IMR-90 (cell line): ENCODE measurements at regions of chr3 and their contacts with region 1.

Region 1: GRCh38 chr3:24220859-24221657 is 273.6 kb downstream of the THRB start:
- DNase-seq: peak; percentile 92
- ATAC-seq: peak; percentile 99
- H3K4me3 ChIP-seq: no peak overlapping the region
- H3K27ac ChIP-seq: no peak overlapping the region
- H3K4me1 ChIP-seq: peaks cover 2% of the 10 kb centered on the region; the same call in 1 of the 2 replicates
- H3K27me3 ChIP-seq: peaks cover 2% of the 10 kb centered on the region
- CTCF ChIP-seq: no peak
- POLR2A ChIP-seq: no peak
- RAD21 ChIP-seq: no peak; the same call in 1 of the 2 replicates

Region 2: GRCh38 chr3:23029001-23029400 is 1192.1 kb before region 1 on chr3:
- CTCF ChIA-PET with region 1: no interaction called
- POLR2A ChIA-PET with region 1: no interaction called
- dilution Hi-C with region 1: no loop called
- in situ Hi-C with region 1: no loop called
- intact Hi-C with region 1: no loop called
- DNase-seq: no peak
- ATAC-seq: no peak
- H3K4me3 ChIP-seq: no peak overlapping the region
- H3K27ac ChIP-seq: no peak overlapping the region
- H3K4me1 ChIP-seq: no peaks in the 10 kb centered on the region
- H3K27me3 ChIP-seq: peaks cover 2% of the 10 kb centered on the region; the same call in 1 of the 2 replicates
- CTCF ChIP-seq: no peak
- POLR2A ChIP-seq: no peak
- RAD21 ChIP-seq: no peak

Region 3: DNA sequence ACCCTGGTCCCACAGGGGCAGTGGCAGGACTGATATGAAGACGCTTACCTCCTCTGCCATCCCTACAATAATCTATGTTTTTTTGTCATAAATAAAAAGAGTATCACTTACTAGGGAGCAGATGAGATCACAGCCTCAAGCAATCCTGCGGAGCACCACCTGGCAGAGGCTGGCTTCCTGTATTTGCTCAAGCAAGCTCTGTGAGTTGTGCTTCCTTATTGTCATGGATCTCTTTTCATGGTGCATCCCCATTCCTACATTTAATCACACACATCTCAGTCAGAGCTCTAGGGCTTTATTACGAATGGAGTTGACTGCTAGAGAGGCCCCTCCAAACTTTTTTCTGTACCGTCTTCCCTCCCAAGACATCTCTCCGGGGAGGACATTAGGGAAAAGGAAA is 832.0 kb before region 1 on chr3:
- CTCF ChIA-PET with region 1: interaction called, 10 read pairs
- POLR2A ChIA-PET with region 1: no interaction called
- dilution Hi-C with region 1: no loop called
- in situ Hi-C with region 1: no loop called
- intact Hi-C with region 1: no loop called
- DNase-seq: no peak
- ATAC-seq: no peak
- H3K4me3 ChIP-seq: no peak overlapping the region
- H3K27ac ChIP-seq: no peak overlapping the region
- H3K4me1 ChIP-seq: no peaks in the 10 kb centered on the region; the same call in 1 of the 2 replicates
- H3K27me3 ChIP-seq: no peaks in the 10 kb centered on the region
- CTCF ChIP-seq: no peak
- POLR2A ChIP-seq: no peak
- RAD21 ChIP-seq: no peak

Region 4: GRCh38 chr3:23537101-23537551 is 683.9 kb before region 1 on chr3:
- CTCF ChIA-PET with region 1: no interaction called
- POLR2A ChIA-PET with region 1: no interaction called
- dilution Hi-C with region 1: no loop called
- in situ Hi-C with region 1: no loop called
- intact Hi-C with region 1: no loop called
- DNase-seq: no peak
- ATAC-seq: no peak
- H3K4me3 ChIP-seq: no peak overlapping the region
- H3K27ac ChIP-seq: no peak overlapping the region
- H3K4me1 ChIP-seq: no peaks in the 10 kb centered on the region
- H3K27me3 ChIP-seq: no peaks in the 10 kb centered on the region
- CTCF ChIP-seq: no peak
- POLR2A ChIP-seq: no peak
- RAD21 ChIP-seq: no peak

Region 5: GRCh38 chr3:24047513-24047912 is 173.5 kb before region 1 on chr3:
- CTCF ChIA-PET with region 1: no interaction called
- POLR2A ChIA-PET with region 1: no interaction called
- dilution Hi-C with region 1: no loop called
- in situ Hi-C with region 1: no loop called
- intact Hi-C with region 1: loop called (anchors 5 kb)
- DNase-seq: no peak
- ATAC-seq: peak; percentile 58
- H3K4me3 ChIP-seq: no peak overlapping the region
- H3K27ac ChIP-seq: no peak overlapping the region
- H3K4me1 ChIP-seq: peaks cover 11% of the 10 kb centered on the region
- H3K27me3 ChIP-seq: no peaks in the 10 kb centered on the region
- CTCF ChIP-seq: no peak
- POLR2A ChIP-seq: no peak
- RAD21 ChIP-seq: no peak

Region 6: DNA sequence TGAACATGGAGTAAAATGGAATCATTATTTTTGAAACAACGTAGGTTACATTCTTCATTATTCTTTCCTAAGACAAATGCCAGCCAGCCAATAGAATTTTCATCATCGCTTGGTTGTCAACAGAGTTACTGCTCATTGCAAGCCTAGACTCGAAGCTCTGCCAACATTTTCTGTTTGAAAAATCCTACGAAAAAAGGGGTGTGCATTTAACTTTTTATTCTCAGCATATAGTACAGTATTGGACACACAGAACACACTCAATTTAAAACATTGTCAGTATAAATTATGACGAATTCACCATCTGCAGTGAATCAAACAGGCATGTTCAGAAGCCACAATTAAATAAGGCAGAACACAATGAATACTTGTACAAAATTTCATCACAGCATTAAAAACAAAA is 43.9 kb before region 1 on chr3:
- CTCF ChIA-PET with region 1: no interaction called
- POLR2A ChIA-PET with region 1: no interaction called
- dilution Hi-C with region 1: no loop called
- in situ Hi-C with region 1: no loop called
- intact Hi-C with region 1: no loop called
- DNase-seq: no peak
- ATAC-seq: no peak
- H3K4me3 ChIP-seq: no peak overlapping the region
- H3K27ac ChIP-seq: no peak overlapping the region
- H3K4me1 ChIP-seq: no peaks in the 10 kb centered on the region
- H3K27me3 ChIP-seq: no peaks in the 10 kb centered on the region; the same call in 1 of the 2 replicates
- CTCF ChIP-seq: no peak
- POLR2A ChIP-seq: no peak
- RAD21 ChIP-seq: no peak